WTC11 (cell line): ENCODE measurements at regions of chr11 and their contacts with region 1.

Region 1: DNA sequence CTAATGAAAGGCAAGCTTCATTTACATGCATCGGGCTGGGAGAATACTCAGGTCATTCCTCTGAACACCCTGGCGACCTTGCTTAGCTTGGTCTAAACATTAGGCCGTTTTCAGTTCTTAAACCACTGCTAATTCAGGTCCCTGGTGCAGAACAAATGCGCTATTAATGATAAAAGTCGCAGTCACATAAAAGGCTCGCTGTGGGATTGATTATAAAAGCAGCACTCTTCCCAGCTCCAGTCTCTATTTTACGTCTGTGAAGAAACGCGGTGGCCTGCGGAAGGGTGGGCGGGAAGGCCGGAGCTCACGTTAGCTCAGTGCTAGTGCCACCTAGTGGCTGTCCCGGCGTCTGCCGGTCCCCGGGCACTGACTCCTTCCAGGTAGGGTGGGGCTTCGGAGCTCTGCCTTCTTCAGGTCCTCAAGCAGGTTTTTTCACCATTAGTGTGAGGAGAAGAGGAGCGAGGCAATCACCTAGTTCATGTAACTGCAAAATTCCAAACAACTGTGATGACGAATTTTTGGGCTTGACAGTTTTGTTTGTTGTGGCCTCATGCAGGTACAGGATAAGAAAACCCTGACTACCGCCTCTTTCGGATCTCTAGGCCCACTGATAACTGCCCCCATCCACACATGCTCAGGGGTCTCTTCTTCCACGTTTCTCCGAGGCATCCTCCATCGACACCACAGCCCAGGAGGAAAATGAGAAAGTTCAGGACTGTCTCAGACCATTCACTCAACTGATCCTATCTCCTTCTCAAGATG is 66.5 kb upstream of the CLMP start:
- DNase-seq: peak; percentile 93
- ATAC-seq: peak; percentile 98
- H3K4me3 Mint-ChIP-seq: peak overlapping the region; percentile 44
- H3K27ac Mint-ChIP-seq: no peak overlapping the region
- H3K4me1 Mint-ChIP-seq: peaks cover 7% of the 10 kb centered on the region; the same call in 1 of the 2 replicates
- H3K27me3 Mint-ChIP-seq: peaks cover 33% of the 10 kb centered on the region
- CTCF ChIP-seq: peak; percentile 87

Region 2: GRCh38 chr11:123046473-123047259 is 214.9 kb before region 1 on chr11:
- CTCF ChIA-PET with region 1: interaction called, 13 read pairs
- POLR2A ChIA-PET with region 1: no interaction called
- DNase-seq: no peak
- ATAC-seq: no peak
- H3K4me3 Mint-ChIP-seq: no peak overlapping the region
- H3K27ac Mint-ChIP-seq: no peak overlapping the region
- H3K4me1 Mint-ChIP-seq: no peaks in the 10 kb centered on the region
- H3K27me3 Mint-ChIP-seq: no peaks in the 10 kb centered on the region
- CTCF ChIP-seq: no peak

Region 3: GRCh38 chr11:123103326-123103980 is 158.1 kb before region 1 on chr11:
- CTCF ChIA-PET with region 1: interaction called, 113 read pairs
- POLR2A ChIA-PET with region 1: no interaction called
- DNase-seq: peak; percentile 22
- ATAC-seq: peak; percentile 65
- H3K4me3 Mint-ChIP-seq: no peak overlapping the region
- H3K27ac Mint-ChIP-seq: 0 out of 2 replicates have a peak overlapping the region, but pooled peaks have one; percentile 41
- H3K4me1 Mint-ChIP-seq: peaks cover 27% of the 10 kb centered on the region
- H3K27me3 Mint-ChIP-seq: no peaks in the 10 kb centered on the region
- CTCF ChIP-seq: peak; percentile 46

Region 4: GRCh38 chr11:123145220-123145619 is 116.3 kb before region 1 on chr11:
- CTCF ChIA-PET with region 1: interaction called, 14 read pairs
- POLR2A ChIA-PET with region 1: no interaction called
- DNase-seq: no peak
- ATAC-seq: peak; percentile 13
- H3K4me3 Mint-ChIP-seq: no peak overlapping the region
- H3K27ac Mint-ChIP-seq: no peak overlapping the region
- H3K4me1 Mint-ChIP-seq: peaks cover 23% of the 10 kb centered on the region
- H3K27me3 Mint-ChIP-seq: no peaks in the 10 kb centered on the region; the same call in 1 of the 2 replicates
- CTCF ChIP-seq: no peak

Region 5: DNA sequence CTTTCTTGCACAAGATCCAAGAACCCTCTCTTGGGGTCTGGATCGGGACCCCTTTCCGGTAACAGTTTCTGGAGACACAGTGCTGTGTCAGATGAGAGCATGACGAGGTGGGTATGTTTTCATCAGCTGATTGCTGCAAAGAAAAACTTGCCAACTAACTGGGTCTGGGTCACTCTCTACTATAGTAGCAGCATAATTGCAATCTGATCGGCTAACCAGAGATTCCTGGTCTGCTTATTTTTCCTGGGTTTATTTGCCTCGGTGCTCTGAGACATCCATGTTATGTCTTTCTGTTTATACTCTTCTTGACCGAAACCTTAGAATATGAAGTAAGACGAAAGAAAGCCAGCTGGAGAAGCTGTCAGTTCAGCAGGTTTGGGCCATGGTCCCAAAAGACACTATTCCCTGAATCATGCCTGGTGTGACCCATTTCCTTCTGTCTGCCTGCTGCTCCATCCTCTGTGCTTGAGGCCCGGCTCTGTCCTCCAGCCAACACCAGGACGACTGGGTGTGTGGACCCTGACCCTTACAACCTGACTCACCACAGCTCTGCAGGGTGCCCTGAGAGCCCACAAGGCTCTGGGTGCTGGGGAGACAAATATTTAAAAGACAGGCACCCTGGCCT is 42.3 kb before region 1 on chr11:
- CTCF ChIA-PET with region 1: interaction called, 11 read pairs
- POLR2A ChIA-PET with region 1: interaction called, 3 read pairs
- DNase-seq: no peak
- ATAC-seq: no peak
- H3K4me3 Mint-ChIP-seq: no peak overlapping the region
- H3K27ac Mint-ChIP-seq: peak overlapping the region; percentile 52; the same call in 1 of the 2 replicates
- H3K4me1 Mint-ChIP-seq: peaks cover 38% of the 10 kb centered on the region
- H3K27me3 Mint-ChIP-seq: no peaks in the 10 kb centered on the region; the same call in 1 of the 2 replicates
- CTCF ChIP-seq: no peak

Region 6: GRCh38 chr11:123351375-123351774 is 89.8 kb after region 1 on chr11:
- CTCF ChIA-PET with region 1: interaction called, 11 read pairs
- POLR2A ChIA-PET with region 1: no interaction called
- DNase-seq: peak; percentile 58
- ATAC-seq: peak; percentile 81
- H3K4me3 Mint-ChIP-seq: no peak overlapping the region
- H3K27ac Mint-ChIP-seq: no peak overlapping the region
- H3K4me1 Mint-ChIP-seq: peaks cover 16% of the 10 kb centered on the region
- H3K27me3 Mint-ChIP-seq: peaks cover 11% of the 10 kb centered on the region
- CTCF ChIP-seq: no peak